Dorsolateral prefrontal cortex (tissue), 120 donors: ENCODE measurements at regions of chr20 and their contacts with region 1.

Region 1: GRCh38 chr20:43456809-43457639 is 672 bp upstream of the SRSF6 start:
- DNase-seq: peak; percentile 90 to 99 (median 94)
- H3K4me3 ChIP-seq: peak overlapping the region; percentile 55 to 100 (median 92)
- H3K27ac ChIP-seq: peak overlapping the region; percentile 91 to 100 (median 99)
- H3K27me3 ChIP-seq: no peaks in the 10 kb centered on the region
- CTCF ChIP-seq: peak in 2 of 56 donors; percentile 0 to 28

Region 2: DNA sequence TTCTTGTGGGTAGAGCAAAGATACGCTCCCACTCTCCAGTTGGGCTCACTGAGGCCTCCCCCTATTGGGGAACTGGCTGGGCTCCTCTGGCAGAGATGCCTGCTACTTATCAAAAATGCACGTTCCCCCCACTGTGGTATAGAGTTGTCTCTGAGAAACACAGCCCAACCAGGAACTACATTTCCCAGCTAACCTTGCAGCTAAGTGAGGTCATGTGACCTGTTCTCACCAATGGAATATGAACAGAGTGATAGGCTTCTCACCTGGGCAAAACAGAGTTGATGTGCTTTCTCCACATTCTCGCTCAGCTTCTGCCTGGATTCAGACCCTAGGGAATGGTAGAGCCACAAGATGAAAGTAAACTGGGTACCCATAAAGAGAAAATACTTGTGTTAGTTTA is 218.2 kb before region 1 on chr20:
- intact Hi-C with region 1: no loop called
- DNase-seq: no peak
- H3K4me3 ChIP-seq: no peak overlapping the region
- H3K27ac ChIP-seq: no peak overlapping the region
- H3K27me3 ChIP-seq: peaks cover 0 to 7% (median 0%) of the 10 kb centered on the region in 45 donors
- CTCF ChIP-seq: no peak

Region 3: DNA sequence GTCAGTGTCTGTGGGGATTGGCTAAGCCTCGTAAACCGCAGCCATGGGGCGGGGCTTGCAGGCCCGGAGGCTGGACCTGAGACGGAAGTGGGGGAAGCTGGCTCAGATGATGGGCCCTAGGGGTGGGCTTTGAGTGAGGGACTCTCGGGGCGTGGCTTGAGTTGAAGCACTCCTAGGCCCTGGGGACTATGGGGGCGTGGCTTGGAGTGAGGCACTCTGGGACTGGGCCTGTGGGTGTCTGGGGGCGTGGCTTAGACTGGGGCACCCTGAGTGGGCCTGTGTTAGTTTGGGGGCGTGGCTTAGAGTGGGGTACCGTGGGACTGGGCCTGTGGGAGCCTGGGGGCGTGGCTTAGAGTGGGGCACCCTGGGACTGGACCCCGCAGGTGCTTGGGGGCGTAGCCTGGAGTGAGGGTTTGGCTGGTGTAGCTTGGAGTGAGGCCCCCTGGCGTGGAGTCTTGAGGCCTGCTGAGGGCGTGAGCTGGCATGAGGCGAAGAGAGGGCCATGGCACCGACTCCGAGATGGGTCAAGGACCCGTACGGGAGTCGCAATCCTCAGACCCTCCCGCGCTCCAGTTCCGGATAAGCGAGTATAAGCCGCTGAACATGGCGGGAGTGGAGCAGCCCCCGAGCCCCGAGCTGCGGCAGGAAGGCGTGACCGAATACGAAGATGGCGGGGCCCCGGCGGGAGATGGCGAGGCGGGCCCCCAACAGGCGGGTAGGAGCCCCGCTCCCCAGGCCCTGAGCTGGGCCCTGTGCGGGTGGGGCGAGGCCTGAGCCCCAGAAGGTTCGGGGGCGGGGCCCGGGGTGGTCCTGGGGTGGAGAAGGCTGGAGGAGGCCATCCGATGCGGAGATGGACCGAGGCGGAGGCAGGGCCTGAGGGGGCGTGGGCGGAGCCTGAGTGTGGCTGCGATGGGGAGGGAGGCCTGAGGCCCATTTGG is 57.3 kb after region 1 on chr20:
- intact Hi-C with region 1: loop called (anchors 2 to 5 kb)
- DNase-seq: peak; percentile 84 to 98 (median 96)
- H3K4me3 ChIP-seq: peak overlapping the region; percentile 38 to 77 (median 64)
- H3K27ac ChIP-seq: peak overlapping the region in 54 of 59 donors; percentile 20 to 87 (median 69)
- H3K27me3 ChIP-seq: no peaks in the 10 kb centered on the region
- CTCF ChIP-seq: peak in 23 of 56 donors; percentile 2 to 49 (median 20)

Region 4: GRCh38 chr20:43563429-43563828 is 106.4 kb after region 1 on chr20:
- intact Hi-C with region 1: loop called in 1 of 2 experiments (anchors 10 kb)
- DNase-seq: no peak
- H3K4me3 ChIP-seq: no peak overlapping the region
- H3K27ac ChIP-seq: peak overlapping the region in 33 of 59 donors; percentile 3 to 98 (median 92)
- H3K27me3 ChIP-seq: no peaks in the 10 kb centered on the region
- CTCF ChIP-seq: peak in 11 of 56 donors; percentile 8 to 41 (median 12)

Region 5: GRCh38 chr20:43590392-43591323 is 133.6 kb after region 1 on chr20 and contains the start of gene IFT52:
- intact Hi-C with region 1: loop called in 1 of 2 experiments (anchors 2 kb)
- DNase-seq: peak; percentile 82 to 93 (median 92)
- H3K4me3 ChIP-seq: peak within 1 kb of the TSS; percentile 75 to 100 (median 93)
- H3K27ac ChIP-seq: peak within 1 kb of the TSS; percentile 46 to 97 (median 89)
- H3K27me3 ChIP-seq: no peaks in the 10 kb centered on the region
- CTCF ChIP-seq: peak in 25 of 56 donors; percentile 0 to 51 (median 23)
- total RNA-seq, gene IFT52: 16.3 to 36.7 (median 24.2) TPM

Region 6: DNA sequence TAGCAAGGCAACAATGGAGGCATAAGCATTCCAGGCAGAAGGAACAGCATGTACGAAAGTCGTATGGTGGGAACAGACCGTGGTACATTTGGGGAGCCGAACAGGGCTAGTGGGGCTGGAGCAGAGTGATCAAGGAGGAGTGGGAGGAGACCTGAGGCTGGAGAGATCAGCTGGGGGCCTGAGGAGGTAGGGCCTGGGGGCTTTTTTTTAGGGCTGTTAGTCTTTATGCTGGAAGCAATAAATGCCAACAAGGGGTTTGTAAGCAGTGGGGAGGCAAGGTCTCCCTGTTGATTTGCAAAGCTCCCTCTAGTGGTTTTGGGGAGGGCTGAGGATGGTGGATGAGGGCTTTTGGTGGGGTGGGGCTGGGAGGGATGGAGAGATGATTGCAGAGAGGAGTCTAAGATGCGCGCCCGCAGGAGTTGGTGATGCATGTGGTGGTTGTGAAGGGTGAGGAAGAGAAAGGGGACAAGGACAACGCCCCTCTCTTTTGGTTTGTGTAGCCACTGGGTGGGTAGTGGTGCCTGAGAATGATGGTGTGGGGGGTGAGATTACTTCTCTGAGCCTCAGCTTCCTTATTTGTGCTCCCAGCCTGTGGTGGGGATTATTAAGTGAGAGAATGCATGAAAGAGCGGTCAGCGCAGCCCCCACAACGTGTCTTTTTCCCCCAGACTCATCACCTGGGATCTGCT is 383.5 kb after region 1 on chr20:
- intact Hi-C with region 1: no loop called
- DNase-seq: no peak
- H3K4me3 ChIP-seq: no peak overlapping the region
- H3K27ac ChIP-seq: no peak overlapping the region
- H3K27me3 ChIP-seq: peaks cover 0 to 6% (median 0%) of the 10 kb centered on the region in 45 donors
- CTCF ChIP-seq: peak in 7 of 56 donors; percentile 6 to 38 (median 18)

Region 7: GRCh38 chr20:44069203-44070011 is 612.4 kb after region 1 on chr20:
- intact Hi-C with region 1: loop called in 1 of 2 experiments (anchors 10 kb)
- DNase-seq: peak in 2 of 10 donors; percentile 20 to 33
- H3K4me3 ChIP-seq: no peak overlapping the region
- H3K27ac ChIP-seq: peak overlapping the region in 16 of 59 donors; percentile 2 to 78 (median 46)
- H3K27me3 ChIP-seq: no peaks in the 10 kb centered on the region
- CTCF ChIP-seq: no peak

Region 8: GRCh38 chr20:44080646-44081267 is 623.7 kb after region 1 on chr20:
- intact Hi-C with region 1: loop called (anchors 10 kb)
- DNase-seq: peak in 9 of 10 donors; percentile 61 to 87 (median 76)
- H3K4me3 ChIP-seq: peak overlapping the region in 5 of 59 donors; percentile 14 to 20 (median 17)
- H3K27ac ChIP-seq: no peak overlapping the region
- H3K27me3 ChIP-seq: no peaks in the 10 kb centered on the region
- CTCF ChIP-seq: peak; percentile 95 to 100 (median 99)

Region 9: DNA sequence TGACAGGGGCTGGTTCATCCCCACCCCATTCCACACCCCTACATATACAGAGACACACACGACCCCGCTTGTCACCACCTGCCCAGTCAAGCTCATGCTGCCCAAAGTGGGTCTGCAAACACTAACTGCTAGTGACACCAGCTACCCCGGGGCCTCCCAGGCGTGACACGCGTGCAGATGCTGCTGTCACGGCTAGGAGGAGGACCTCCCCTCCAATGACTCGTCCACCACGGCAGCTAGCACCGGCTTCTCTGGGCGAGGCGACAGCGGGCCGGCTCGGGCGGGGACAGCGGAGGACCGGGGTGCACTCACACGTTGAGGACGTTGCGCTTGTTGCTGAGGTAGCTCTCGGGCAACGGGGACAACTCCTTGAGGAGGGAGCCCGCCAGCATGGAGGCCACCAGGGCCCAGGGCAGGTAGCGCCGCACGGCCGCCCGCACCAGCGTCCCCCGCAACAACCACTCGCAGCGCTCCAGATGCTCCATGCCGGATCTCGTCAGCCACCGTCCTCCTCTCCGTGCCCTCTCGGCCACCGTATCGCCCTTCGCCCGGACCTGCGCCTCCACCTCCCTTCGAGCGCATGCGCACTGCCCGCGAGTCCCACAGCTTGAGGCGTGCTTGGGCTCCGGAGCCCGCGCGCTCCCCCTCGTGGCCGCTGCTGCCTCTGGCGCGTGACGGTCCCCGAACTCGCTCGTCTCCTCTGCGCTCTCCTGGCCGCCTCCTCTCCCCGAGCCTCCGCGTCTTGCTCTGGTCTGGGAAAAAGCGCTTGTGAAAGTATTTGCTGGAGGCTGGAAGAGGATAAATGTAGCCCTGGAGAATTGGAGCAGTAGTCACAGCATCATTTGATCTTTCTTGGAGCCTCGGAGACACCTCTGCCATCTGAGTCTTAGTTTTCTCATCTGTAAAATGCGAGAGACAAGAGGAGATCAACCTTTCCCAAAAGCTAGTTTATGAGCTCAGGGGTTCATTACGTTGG is 853.9 kb after region 1 on chr20 and contains the start of gene FITM2:
- intact Hi-C with region 1: loop called in 1 of 2 experiments (anchors 5 kb)
- DNase-seq: peak; percentile 94 to 98 (median 96)
- H3K4me3 ChIP-seq: peak within 1 kb of the TSS; percentile 67 to 100 (median 95)
- H3K27ac ChIP-seq: peak within 1 kb of the TSS in 53 of 59 donors; percentile 6 to 93 (median 75)
- H3K27me3 ChIP-seq: no peaks in the 10 kb centered on the region
- CTCF ChIP-seq: peak; percentile 93 to 100 (median 99)
- total RNA-seq, gene FITM2: 10.8 to 20.4 (median 16.2) TPM